Left ventricle myocardium superior (tissue), 1 donor: ENCODE measurements at regions of chr7 and their contacts with region 1.

Region 1: GRCh38 chr7:18666107-18666728 is 170.7 kb downstream of the HDAC9 start:
- DNase-seq: peak; percentile 82
- ATAC-seq: peak; percentile 93

Region 2: GRCh38 chr7:18614841-18615240 is 51.4 kb before region 1 on chr7:
- intact Hi-C with region 1: loop called (anchors 2 kb)
- DNase-seq: no peak
- ATAC-seq: no peak

Region 3: GRCh38 chr7:18753972-18754610 is 87.9 kb after region 1 on chr7:
- intact Hi-C with region 1: no loop called
- DNase-seq: no peak
- ATAC-seq: no peak